ENCODE measurements at regions of chr16 and their contacts with region 1.

Region 1: DNA sequence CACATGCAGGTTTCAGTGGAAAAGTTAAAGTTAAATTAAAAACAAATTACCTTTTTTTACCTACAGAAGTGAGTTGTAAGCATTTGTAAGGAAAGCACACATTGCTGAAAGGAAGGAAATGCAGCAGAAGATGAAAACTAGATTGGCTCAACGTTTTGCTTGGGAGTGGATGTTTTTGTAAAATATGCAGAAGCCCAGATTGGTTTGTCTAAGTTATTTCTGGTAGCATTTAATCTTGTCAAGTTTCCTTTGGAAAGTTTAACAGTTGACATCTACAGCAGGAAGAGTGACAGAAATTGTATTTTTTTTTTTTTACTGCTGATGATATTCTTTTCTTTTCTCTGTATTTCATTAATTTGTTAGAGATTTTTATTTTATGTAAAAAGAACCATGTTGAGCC is 315.1 kb upstream of the MON1B start:
- DNase-seq: no peak
- H3K4me3 ChIP-seq: no peak overlapping the region
- H3K27ac ChIP-seq: no peak overlapping the region
- H3K4me1 ChIP-seq: no peaks in the 10 kb centered on the region
- H3K27me3 ChIP-seq: no peaks in the 10 kb centered on the region
- CTCF ChIP-seq: no peak
- POLR2A ChIP-seq: no peak

Region 2: DNA sequence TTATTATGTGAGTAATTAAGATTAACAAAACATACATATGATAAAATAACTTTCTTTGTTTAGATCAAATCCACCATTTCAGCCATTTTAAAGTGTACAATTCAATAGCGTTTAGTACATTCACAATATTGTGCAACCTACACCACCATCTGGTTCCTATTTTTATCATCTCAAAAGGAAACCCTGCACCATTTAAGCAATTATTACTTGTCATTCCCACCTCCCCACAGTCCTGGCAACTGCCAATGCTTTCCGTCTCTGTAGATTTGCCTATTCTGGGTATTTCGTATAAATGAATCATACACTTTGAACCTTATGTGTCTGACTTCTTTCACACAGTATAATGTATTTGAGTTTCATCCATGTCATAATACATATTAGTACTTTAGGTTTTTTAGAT is 761.2 kb before region 1 on chr16:
- intact Hi-C with region 1: no loop called
- DNase-seq: no peak
- H3K4me3 ChIP-seq: no peak overlapping the region
- H3K27ac ChIP-seq: no peak overlapping the region
- H3K4me1 ChIP-seq: no peaks in the 10 kb centered on the region
- H3K27me3 ChIP-seq: no peaks in the 10 kb centered on the region
- CTCF ChIP-seq: no peak
- POLR2A ChIP-seq: no peak

Region 3: GRCh38 chr16:76862901-76863300 is 13.0 kb before region 1 on chr16:
- intact Hi-C with region 1: loop called (anchors 1 kb)
- DNase-seq: no peak
- H3K4me3 ChIP-seq: no peak overlapping the region
- H3K27ac ChIP-seq: no peak overlapping the region
- H3K4me1 ChIP-seq: no peaks in the 10 kb centered on the region
- H3K27me3 ChIP-seq: no peaks in the 10 kb centered on the region
- CTCF ChIP-seq: no peak
- POLR2A ChIP-seq: no peak

Region 4: DNA sequence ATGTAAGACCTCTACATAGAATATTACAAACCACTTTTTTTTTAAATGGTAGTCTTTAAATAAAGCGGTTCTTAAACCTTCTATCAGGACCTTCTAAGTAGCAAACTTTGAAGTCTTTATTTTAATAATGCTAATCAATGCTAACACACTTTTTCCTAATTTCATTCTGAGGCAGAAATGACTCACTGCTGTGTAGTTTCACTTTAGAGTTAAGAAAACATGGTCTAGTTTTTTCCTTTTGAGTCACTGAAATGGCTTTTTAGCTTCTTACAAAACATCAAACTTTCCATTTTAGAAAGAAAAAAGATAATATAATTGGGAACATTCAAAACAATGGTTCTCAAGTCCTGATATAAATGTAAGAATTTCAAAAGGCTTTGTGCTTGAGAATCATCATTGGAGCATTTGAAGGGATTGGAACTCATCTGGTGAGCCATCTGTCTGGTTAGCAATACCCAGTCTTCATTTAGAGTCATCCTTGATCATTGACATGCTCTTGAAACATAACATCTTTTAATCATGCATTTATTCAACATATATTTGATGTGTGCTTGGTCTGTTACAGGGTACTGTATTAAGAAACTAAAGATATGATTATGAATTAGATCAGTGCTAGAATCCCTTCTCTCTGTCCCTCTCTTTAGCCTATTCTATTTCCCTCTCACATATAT is 56.8 kb after region 1 on chr16:
- intact Hi-C with region 1: no loop called
- DNase-seq: no peak
- H3K4me3 ChIP-seq: no peak overlapping the region
- H3K27ac ChIP-seq: no peak overlapping the region
- H3K4me1 ChIP-seq: no peaks in the 10 kb centered on the region
- H3K27me3 ChIP-seq: no peaks in the 10 kb centered on the region
- CTCF ChIP-seq: no peak
- POLR2A ChIP-seq: no peak